ENCODE measurements at regions of chr6 and their contacts with region 1.

Region 1: GRCh38 chr6:106872016-106872421 is 102.5 kb downstream of the CD24 start:
- DNase-seq: peak; percentile 67
- ATAC-seq: peak; percentile 77
- H3K4me3 ChIP-seq: no peak overlapping the region
- H3K27ac ChIP-seq: peak overlapping the region; percentile 45
- H3K4me1 ChIP-seq: peaks cover 28% of the 10 kb centered on the region; the same call in 1 of the 2 replicates
- H3K27me3 ChIP-seq: no peaks in the 10 kb centered on the region
- CTCF ChIP-seq: no peak

Region 2: DNA sequence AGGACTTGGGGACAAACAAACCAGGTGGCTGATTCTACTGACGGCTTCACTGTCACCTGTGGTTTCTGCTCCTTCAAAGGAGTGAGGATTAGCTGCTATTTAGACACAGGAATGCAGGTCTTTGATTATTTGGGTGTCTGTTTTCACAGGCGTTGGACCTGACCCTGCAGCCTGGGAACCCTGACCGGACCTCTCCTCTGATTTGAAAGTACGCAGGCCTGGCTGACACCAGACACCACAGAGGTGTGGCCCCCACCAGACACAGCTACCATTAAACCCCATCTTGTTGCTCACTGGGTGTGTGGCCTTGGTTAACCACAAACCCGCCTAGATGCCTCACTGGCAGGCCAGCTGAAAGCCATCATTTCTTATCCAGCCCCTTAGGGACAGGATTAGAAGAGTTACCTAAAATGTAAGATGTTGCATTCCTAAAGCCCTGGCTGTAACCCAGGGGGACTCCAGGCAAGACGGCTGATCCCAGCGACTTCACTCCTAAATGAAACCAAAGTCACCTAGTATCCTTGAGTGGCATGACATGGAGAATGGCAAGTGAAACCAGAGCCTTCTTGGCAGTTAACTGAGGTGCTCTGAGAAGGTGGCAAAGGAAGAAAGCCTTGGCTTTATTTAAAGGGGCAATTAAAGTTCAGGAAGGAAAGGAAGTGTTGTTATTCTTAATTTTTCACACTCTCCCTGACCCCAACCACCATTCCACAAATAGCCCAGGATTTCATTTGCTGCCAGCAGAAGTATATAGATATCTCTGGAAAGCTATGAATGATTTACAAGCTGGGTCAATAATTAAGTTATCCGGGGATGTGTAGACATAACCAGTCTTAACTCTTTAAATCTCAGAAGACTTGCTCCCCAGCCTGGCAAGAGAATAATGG is 72.8 kb before region 1 on chr6:
- CTCF ChIA-PET with region 1: no interaction called
- POLR2A ChIA-PET with region 1: interaction called, 23 read pairs
- intact Hi-C with region 1: no loop called
- DNase-seq: peak; percentile 77
- ATAC-seq: peak; percentile 94
- H3K4me3 ChIP-seq: no peak overlapping the region
- H3K27ac ChIP-seq: peak overlapping the region; percentile 70
- H3K4me1 ChIP-seq: peaks cover 19% of the 10 kb centered on the region
- H3K27me3 ChIP-seq: no peaks in the 10 kb centered on the region
- CTCF ChIP-seq: no peak

Measured in PC-3 (cell line).